Head of caudate nucleus (tissue), 42 donors: ENCODE measurements at regions of chr1 and their contacts with region 1.

Region 1: GRCh38 chr1:165697881-165698760 is at the start of gene ALDH9A1:
- DNase-seq: peak; percentile 76 to 96 (median 90)

Region 2: GRCh38 chr1:165630629-165631341 is 67.3 kb before region 1 on chr1 and contains the start of gene MGST3:
- intact Hi-C with region 1: loop called (anchors 5 kb)
- DNase-seq: peak; percentile 86 to 97 (median 93)

Region 3: DNA sequence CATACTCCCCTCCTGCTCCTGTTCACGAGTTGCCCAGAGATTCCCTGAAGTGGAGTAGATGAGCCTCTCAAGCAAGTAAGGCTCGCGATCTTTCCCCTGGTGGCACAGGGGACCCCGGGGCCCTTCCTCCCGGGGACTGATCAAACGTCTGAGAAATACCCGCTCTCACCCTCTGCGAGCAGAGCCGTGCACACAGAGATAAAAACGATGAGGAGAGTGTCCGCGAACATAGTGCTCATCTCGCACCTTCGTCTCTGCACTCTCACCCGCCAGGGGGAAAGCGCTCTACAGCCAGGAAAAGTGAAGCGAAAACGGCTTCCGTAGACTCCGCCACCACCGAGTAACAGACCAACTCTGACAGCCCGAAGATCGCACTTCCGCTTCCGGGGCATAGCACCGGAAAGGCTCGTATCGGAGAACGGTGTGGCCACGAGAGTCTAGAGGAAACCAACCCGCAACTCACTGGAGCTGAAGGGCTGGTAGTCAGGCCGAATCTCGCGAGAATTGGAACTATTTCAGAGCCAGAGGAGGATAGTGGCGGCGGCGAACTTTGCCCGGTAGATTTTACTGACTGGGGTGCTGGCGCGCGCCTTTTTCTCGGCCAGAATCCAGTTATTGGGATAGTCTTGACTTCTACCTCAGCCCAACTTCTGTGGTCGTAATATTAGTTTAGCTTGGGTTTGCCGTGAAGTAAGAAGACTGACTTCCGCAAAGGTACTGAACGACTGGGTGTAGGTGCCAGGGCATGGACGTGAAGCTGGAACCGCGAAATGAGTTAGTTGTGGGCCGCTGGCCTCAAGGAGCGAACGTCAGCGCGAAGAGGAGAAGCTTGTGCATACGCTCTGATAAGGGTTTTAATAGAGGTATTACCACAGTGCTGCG is 70.6 kb after region 1 on chr1 and contains the start of gene TMCO1:
- intact Hi-C with region 1: loop called (anchors 5 kb)
- DNase-seq: peak; percentile 93 to 99 (median 97)

Region 4: GRCh38 chr1:166170075-166170474 is 472.0 kb after region 1 on chr1:
- intact Hi-C with region 1: no loop called
- DNase-seq: peak in 3 of 42 donors; percentile 5 to 47 (median 13)